ENCODE measurements at regions of chr1 and their contacts with region 1.

Region 1: GRCh38 chr1:235087896-235088295 is 40.7 kb downstream of the TOMM20 start:
- DNase-seq: peak in 1 of 3 donors; percentile 1
- ATAC-seq: no peak
- H3K4me3 ChIP-seq: no peak overlapping the region
- H3K27ac ChIP-seq: no peak overlapping the region
- H3K4me1 ChIP-seq: peaks cover 4% of the 10 kb centered on the region
- H3K27me3 ChIP-seq: no peaks in the 10 kb centered on the region

Region 2: GRCh38 chr1:234490793-234491479 is 597.0 kb before region 1 on chr1:
- intact Hi-C with region 1: loop called in 1 of 4 experiments (anchors 5 kb)
- DNase-seq: no peak
- ATAC-seq: no peak
- H3K4me3 ChIP-seq: no peak overlapping the region
- H3K27ac ChIP-seq: no peak overlapping the region
- H3K4me1 ChIP-seq: no peaks in the 10 kb centered on the region
- H3K27me3 ChIP-seq: no peaks in the 10 kb centered on the region

Measured in right cardiac atrium (tissue), 5 donors.